HEK293 (cell line): ENCODE measurements at regions of chr20 and their contacts with region 1.

Region 1: GRCh38 chr20:36613974-36614373 is 8.4 kb downstream of the RAB5IF start:
- H3K4me3 ChIP-seq: no peak overlapping the region
- H3K27ac ChIP-seq: no peak overlapping the region
- H3K4me1 ChIP-seq: no peaks in the 10 kb centered on the region
- CTCF ChIP-seq: no peak

Region 2: GRCh38 chr20:36624068-36624943 is 10.3 kb after region 1 on chr20:
- CTCF ChIA-PET with region 1: interaction called, 11 read pairs
- POLR2A ChIA-PET with region 1: interaction called, 3 read pairs
- H3K4me3 ChIP-seq: no peak overlapping the region
- H3K27ac ChIP-seq: no peak overlapping the region
- H3K4me1 ChIP-seq: no peaks in the 10 kb centered on the region
- CTCF ChIP-seq: no peak

Region 3: GRCh38 chr20:36728986-36729385 is 115.0 kb after region 1 on chr20:
- CTCF ChIA-PET with region 1: interaction called, 13 read pairs
- POLR2A ChIA-PET with region 1: no interaction called
- H3K4me3 ChIP-seq: no peak overlapping the region
- H3K27ac ChIP-seq: no peak overlapping the region
- H3K4me1 ChIP-seq: no peaks in the 10 kb centered on the region
- CTCF ChIP-seq: no peak; the same call in 1 of the 2 replicates

Region 4: DNA sequence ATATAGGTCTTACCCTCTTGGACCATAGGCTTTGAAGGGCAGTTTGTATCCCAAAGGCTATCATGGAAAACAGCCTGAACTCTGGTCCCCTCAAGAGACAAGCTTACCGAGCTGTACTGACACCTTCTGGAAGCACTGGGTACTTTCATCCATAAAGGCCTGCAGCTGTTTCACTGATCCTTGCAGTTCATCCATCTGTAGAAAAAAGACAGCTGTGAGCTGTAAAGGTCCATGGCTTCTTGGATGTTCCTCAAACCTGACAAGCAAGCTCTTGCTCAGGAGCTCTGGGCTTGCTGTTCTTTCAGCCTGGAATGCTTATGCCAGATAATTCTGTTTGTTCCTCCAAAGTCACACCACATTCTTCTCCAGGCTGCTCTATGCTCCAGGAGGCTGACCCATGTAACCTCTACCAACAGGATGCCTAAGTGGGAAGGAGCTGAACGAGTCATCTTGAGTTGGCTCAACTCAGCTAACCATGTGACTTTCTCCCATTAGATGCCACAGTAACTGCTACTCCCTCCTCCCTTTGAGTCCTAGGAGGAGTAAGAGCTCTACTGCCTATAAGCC is 140.8 kb after region 1 on chr20:
- CTCF ChIA-PET with region 1: interaction called, 13 read pairs
- POLR2A ChIA-PET with region 1: no interaction called
- H3K4me3 ChIP-seq: no peak overlapping the region
- H3K27ac ChIP-seq: no peak overlapping the region
- H3K4me1 ChIP-seq: no peaks in the 10 kb centered on the region
- CTCF ChIP-seq: no peak; the same call in 1 of the 2 replicates